Right ventricle myocardium superior (tissue), 1 donor: ENCODE measurements at regions of chr10 and their contacts with region 1.

Region 1: DNA sequence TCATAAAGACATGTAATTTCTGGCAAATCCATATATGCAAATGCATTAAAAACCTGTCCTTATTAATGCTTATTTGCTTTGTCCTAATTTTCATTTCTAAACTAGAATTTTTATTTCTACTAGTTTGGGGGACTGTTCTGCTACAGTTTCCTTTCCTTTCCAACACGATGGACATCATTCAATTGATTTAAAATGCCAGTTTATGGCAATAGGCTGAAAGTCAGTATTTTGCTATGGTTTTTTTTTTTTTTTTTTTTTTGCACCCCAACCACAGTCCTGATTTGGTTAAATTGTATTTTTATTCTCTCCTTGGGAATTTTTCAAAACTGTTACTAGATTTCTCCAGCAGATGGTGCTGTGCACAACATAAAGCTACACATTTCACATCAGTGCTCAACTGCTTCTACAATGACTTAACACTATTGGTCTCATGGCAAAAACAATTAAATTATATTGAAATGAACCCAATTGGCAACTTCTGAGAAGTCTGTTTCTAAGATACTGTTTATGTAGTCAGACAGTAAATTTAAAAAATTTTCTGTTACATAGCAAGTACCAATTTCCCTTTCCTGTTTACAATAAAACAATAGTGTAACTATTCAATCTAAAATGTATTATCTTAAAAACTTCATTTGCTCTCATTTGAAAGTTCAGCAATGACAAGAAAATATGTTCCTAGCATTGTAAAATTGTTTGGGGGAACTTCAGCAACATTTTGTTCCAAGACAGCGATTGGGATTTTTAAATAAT is 193.8 kb upstream of the CCDC6 start:
- DNase-seq: no peak
- ATAC-seq: peak; percentile 82

Region 2: DNA sequence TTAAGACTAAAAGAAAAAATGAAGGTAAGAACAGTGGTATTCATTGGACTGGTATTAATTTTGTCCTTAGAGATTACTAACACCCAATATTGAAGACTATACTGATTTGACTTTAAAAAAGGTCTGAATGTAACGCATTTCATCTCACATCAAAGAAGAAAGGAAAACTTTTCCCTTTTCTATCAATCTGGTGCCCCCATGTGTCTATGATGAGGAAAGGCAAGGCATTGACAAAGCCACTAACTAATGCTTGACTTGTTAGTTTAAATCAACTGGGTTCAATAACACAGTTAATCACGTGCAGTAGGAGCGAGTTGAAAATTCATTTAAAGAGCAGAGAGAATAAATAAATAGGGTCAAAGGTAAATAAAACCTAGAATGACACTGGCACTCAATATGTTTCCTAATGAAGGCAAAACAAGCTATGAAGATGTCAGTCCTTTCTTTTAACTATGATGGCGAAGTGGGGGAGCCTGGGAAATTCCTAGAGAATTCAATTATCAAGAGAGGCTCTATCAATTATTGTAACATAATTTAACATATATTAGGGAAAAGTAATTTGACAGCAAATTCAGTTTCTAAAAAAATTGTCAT is 108.6 kb after region 1 on chr10:
- intact Hi-C with region 1: loop called (anchors 5 kb)
- DNase-seq: no peak
- ATAC-seq: peak; percentile 49